ENCODE measurements at regions of chr16 and their contacts with region 1.

Region 1: DNA sequence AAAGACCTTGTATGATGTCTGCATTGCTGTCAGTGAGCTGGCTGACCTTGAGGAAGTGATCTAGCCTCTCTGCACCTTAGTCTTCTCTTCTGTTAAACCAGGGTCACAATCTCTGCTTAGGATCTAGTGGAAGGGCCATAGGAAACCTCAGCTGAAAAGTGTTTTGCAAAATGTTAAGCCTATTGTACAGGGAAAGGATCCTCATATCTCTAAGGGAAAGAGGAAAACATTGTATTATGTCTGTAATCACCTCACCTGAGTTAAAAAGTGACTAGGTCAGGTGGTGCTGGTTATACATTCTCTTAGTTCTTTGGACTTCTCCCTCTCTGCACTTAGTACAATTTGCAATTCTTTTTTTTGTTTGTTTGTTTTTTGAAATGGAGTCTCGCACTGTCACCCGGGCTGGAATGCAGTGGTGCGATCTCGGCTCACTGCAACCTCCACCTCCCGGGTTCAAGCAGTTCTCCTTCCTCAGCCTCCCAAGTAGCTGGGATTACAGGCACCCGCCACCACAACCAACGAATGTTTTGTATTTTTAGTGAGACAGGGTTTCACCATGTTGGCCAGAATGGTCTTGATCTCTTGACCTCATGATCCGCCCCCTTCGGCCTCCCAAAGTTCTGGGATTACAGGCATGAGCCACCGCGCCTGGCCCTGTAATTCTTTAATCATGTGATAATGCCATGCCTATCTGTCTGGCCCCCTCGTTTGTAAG is 2.0 kb upstream of the SEPHS2 start:
- DNase-seq: no peak
- H3K4me3 ChIP-seq: no peak overlapping the region
- H3K27me3 ChIP-seq: no peaks in the 10 kb centered on the region
- CTCF ChIP-seq: no peak

Region 2: DNA sequence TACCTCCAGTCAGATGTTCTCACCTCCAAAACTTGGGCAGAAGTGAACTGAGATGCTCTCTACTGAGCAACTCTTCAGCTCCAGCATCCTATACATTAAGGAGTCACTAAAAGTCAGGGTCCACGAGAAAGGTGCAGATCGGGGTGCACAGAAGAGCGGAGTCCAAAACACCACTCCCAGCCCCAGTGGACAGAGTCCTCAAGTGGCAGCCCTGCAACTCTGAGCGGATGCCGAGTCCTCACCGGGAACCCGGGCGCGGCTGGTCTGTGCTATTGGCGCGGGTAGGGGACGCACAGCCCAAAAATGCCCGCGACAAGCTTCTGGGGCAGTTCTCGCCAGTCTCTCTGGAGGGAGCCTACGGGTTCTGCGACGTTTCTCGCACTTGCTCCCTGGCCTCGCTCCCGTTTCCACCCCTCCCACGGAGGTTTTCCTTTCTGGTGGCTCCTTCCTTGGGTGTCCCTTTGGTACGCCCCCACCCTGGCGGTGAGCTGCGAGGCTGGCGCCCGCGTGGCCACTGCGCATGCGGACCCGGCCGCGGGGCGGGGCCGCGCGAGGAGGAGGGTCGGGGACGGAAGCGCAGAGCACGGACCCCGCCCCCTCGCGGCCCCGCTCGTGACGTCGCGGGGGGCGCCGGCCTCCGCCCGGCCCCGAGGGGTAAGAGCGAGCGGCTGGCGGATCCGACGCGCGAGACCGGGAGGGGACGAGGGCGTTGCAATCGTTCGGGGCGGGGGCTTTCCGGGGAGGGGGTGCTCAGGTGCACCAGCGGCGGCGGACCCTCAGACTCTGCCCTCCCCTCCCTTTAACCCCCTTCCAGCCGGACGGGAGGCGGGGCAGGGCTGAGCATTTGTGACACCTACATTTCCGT is 486.0 kb before region 1 on chr16 and contains the start of gene TMEM219:
- CTCF ChIA-PET with region 1: no interaction called
- POLR2A ChIA-PET with region 1: no interaction called
- DNase-seq: peak; percentile 61
- H3K4me3 ChIP-seq: peak within 1 kb of the TSS; percentile 86
- H3K27me3 ChIP-seq: no peaks in the 10 kb centered on the region
- CTCF ChIP-seq: peak; percentile 43
- polyA plus RNA-seq, gene TMEM219: 112 and 146 TPM in 2 replicates

Region 3: DNA sequence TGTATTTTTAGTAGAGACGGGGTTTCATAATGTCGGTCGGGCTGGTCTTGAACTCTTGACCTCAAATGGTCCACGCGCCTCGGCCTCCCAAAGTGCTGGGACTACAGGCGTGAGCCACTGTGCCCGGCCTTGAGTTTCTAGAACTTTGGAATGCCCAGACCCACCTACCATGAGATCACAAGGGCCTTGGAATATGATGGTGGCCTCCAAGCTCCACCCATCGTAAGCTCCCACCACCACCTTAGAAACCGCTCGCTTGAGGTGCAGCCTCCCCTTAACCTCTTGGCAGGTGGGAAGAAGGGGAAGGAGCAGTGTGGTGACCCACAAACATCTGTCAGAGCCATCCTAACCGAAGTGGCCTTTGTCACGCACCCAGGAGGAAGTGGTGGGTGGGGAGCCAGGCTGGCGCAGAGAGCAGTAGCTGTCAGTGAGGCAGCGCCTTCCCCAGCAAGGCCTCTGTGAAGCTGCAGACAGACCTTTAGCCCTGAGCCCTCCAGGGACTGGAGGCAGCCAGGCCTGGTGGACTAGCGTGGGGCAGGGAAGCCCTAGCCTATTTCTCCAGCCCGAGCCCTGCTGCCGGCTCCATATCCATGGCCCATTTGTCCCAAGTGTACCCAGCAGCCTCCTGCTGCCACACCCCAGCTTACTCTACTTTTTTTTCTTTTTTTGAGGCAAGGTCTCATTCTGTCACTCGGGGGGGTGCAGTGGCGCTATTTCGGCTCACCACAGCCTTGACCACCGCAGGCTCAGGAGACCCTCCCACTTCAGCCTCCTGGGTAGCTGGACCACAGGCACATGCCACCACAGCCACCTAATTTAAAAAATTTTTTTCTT is 11.1 kb after region 1 on chr16:
- CTCF ChIA-PET with region 1: interaction called, 10 read pairs
- POLR2A ChIA-PET with region 1: no interaction called
- DNase-seq: no peak
- H3K4me3 ChIP-seq: no peak overlapping the region
- H3K27me3 ChIP-seq: peaks cover 2% of the 10 kb centered on the region
- CTCF ChIP-seq: no peak

Region 4: DNA sequence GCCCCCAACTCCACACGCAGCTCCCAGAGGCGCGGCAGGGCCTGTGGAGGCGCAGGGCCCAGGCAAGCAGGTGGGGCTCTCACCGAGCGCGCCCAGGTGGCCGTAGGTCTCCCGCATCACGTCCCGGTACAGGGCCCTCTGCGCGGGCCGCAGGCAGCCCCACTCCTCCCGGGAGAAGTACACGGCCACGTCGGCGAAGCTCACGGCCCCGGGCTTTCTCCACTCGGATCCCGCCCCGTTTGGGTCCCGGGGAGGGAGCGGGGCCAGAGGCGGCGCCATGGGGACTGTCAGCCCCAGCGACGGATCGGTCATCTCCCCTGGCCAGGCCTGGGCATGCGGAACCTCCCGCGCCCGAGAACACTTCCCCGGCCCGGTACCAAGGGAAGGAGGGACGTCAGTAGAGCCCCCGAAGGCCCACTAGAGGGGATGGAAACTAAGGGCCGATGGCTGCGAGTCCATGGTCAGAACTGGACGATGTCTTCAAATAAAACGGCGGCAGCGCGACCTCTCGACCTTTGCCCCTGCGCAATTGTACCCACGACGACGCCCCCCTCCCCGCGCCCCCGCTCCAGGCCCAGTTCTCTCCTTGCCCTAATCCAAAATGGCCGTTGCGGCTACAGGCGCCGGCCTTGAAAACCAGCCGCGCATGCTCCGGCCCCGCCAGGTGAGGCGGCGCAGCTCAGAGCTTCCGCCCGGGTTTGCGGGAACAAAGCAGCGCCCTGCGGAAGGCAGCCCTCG is 86.9 kb after region 1 on chr16 and contains the start of gene ZNF747:
- CTCF ChIA-PET with region 1: interaction called, 13 read pairs
- POLR2A ChIA-PET with region 1: no interaction called
- DNase-seq: no peak
- H3K4me3 ChIP-seq: peak within 1 kb of the TSS; percentile 56
- H3K27me3 ChIP-seq: no peaks in the 10 kb centered on the region
- CTCF ChIP-seq: no peak
- polyA plus RNA-seq, gene ZNF747: 5.5 and 6.4 TPM in 2 replicates

Region 5: GRCh38 chr16:30628627-30629540 is 181.2 kb after region 1 on chr16:
- CTCF ChIA-PET with region 1: interaction called, 13 read pairs
- POLR2A ChIA-PET with region 1: no interaction called
- DNase-seq: no peak
- H3K4me3 ChIP-seq: no peak overlapping the region
- H3K27me3 ChIP-seq: no peaks in the 10 kb centered on the region
- CTCF ChIP-seq: peak; percentile 95

Region 6: DNA sequence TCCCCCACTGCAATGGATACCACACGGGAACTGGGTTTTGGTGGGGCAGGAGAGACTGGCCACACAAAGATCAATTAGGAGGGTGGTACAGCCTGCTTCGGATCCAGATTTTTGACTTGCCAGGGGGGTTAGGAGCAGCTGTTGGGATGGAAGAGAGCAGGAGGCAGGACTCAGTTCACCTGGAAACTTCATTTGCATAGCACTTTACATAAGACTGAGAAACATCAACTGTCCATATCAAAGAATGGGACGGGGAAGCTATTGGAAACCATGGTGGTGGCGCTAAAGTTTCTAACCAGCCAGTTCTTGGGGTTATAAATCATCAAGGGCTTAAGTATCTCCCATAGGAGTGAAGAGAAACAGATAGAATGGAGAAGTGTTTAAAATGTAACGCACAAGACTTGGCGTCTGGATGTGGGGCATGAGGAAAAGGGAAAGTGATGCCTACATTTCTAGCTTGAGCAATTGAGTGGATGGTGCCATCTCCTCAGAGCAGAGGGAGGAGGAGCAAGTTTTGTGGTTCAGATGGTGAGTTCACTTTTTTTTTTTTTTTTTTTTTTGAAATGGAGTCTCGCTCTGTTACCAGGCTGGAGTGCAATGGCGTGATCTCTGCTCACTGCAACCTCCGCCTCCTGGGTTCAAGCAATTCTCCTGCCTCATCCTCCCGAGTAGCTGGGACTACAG is 244.9 kb after region 1 on chr16:
- CTCF ChIA-PET with region 1: interaction called, 10 read pairs
- POLR2A ChIA-PET with region 1: no interaction called
- DNase-seq: no peak
- H3K4me3 ChIP-seq: no peak overlapping the region
- H3K27me3 ChIP-seq: no peaks in the 10 kb centered on the region; the same call in 1 of the 2 replicates
- CTCF ChIP-seq: no peak

Measured in BJ (cell line).